Activated naive CD4-positive, alpha-beta T cell treated with anti-CD3 and anti-CD28 coated beads for 36 hours (primary cell): ENCODE measurements at regions of chr15 and their contacts with region 1.

Region 1: GRCh38 chr15:65869127-65869953 is at the start of gene RAB11A:
- DNase-seq: peak; percentile 95
- H3K4me3 Mint-ChIP-seq: peak within 1 kb of the TSS; percentile 99
- H3K27ac Mint-ChIP-seq: peak within 1 kb of the TSS; percentile 95
- H3K4me1 Mint-ChIP-seq: peaks cover 26% of the 10 kb centered on the region
- H3K27me3 Mint-ChIP-seq: peaks cover 4% of the 10 kb centered on the region
- total RNA-seq, gene RAB11A: 151 to 157 TPM

Region 2: GRCh38 chr15:65516997-65517865 is 352.1 kb before region 1 on chr15 and contains the start of gene DPP8:
- CTCF ChIA-PET with region 1: no interaction called
- intact Hi-C with region 1: loop called (anchors 1 kb)
- DNase-seq: peak; percentile 96
- H3K4me3 Mint-ChIP-seq: peak within 1 kb of the TSS; percentile 95
- H3K27ac Mint-ChIP-seq: peak within 1 kb of the TSS; percentile 88
- H3K4me1 Mint-ChIP-seq: peaks cover 35% of the 10 kb centered on the region
- H3K27me3 Mint-ChIP-seq: no peaks in the 10 kb centered on the region
- total RNA-seq, gene DPP8: 23.0 to 24.9 TPM

Region 3: GRCh38 chr15:65792130-65792987 is 77.0 kb before region 1 on chr15 and contains the start of gene DENND4A:
- CTCF ChIA-PET with region 1: no interaction called
- intact Hi-C with region 1: loop called (anchors 1 kb)
- DNase-seq: peak; percentile 99
- H3K4me3 Mint-ChIP-seq: peak within 1 kb of the TSS; percentile 88
- H3K27ac Mint-ChIP-seq: peak within 1 kb of the TSS; percentile 98
- H3K4me1 Mint-ChIP-seq: peaks cover 58% of the 10 kb centered on the region
- H3K27me3 Mint-ChIP-seq: no peaks in the 10 kb centered on the region
- total RNA-seq, gene DENND4A: 23.9 to 24.9 TPM

Region 4: DNA sequence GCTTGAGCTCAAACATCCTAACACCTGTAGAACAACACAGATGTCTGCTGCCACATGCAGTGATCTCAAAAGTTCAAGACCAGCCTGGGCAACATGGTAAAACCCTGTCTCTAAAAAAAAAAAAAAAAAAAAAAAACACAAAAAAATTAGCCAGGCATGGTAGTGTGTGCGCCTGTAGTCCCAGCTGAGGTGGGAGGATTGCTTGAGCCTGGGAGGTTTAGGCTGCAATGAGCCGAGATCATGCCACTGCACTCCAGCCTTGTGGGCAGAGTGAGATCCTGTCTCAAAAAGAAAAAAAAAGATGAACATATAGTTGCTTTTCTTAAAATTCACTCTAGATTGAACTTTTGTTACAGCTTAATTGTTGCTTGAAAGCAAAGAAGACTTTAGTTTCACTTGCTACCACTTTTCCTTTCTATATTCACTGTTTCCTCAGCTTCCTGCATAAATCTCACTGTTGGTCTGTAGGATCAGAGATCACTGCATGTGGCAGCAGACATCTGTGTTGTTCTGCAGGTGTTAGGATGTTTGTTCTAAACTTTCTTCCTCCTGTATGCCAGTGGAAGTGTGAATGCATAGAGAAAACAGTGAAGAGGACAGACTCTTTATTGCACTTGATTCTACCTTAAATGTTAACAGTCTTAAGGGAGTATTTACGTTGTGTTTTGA is 12.6 kb after region 1 on chr15:
- CTCF ChIA-PET with region 1: interaction called, 12 read pairs
- intact Hi-C with region 1: loop called (anchors 1 kb)
- DNase-seq: no peak
- H3K4me3 Mint-ChIP-seq: no peak overlapping the region
- H3K27ac Mint-ChIP-seq: peak overlapping the region; percentile 66
- H3K4me1 Mint-ChIP-seq: peaks cover 61% of the 10 kb centered on the region
- H3K27me3 Mint-ChIP-seq: no peaks in the 10 kb centered on the region

Region 5: DNA sequence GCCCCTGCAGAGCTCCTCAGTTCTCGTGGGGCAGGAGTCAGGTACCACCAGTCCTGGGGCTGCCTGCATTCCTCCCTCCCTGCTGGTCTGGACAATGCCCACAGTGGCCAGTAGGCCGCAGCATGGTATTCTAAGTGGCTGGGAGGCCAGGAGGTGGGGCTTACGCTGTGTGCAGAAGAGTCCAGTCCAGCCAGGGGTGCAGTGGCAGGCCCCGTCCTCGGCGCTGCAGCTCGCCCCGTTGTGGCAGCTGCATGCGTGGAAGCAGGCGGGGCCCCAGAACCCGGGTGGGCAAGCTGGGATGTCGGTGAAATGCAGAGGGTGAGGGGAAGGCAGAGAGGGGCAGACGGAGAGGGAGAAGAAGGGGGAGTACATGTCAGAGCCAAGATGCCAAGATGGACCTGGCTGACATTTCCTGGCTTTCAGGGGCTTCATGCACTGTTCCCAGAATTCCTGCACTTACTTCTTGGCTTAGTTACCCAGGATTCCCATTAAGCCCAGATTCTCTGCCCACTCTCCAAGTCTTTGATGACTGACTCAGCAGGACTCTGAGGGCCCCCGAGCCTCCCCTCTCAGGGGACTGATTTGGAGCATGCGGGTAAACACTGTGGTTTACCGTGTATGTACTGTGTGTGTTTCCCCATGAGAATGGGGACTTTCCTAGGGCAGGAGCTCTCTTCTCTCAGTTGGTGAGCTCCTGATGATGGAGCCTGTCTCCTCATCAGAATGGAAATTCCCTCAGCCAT is 47.5 kb after region 1 on chr15:
- CTCF ChIA-PET with region 1: interaction called, 5 read pairs
- intact Hi-C with region 1: loop called (anchors 2 kb)
- DNase-seq: peak; percentile 81
- H3K4me3 Mint-ChIP-seq: no peak overlapping the region
- H3K27ac Mint-ChIP-seq: peak overlapping the region; percentile 54
- H3K4me1 Mint-ChIP-seq: peaks cover 30% of the 10 kb centered on the region
- H3K27me3 Mint-ChIP-seq: no peaks in the 10 kb centered on the region

Region 6: GRCh38 chr15:67331676-67332075 is 1462.3 kb after region 1 on chr15:
- CTCF ChIA-PET with region 1: no interaction called
- intact Hi-C with region 1: no loop called
- DNase-seq: no peak
- H3K4me3 Mint-ChIP-seq: no peak overlapping the region
- H3K27ac Mint-ChIP-seq: no peak overlapping the region
- H3K4me1 Mint-ChIP-seq: no peaks in the 10 kb centered on the region
- H3K27me3 Mint-ChIP-seq: peaks cover 4% of the 10 kb centered on the region

Region 7: GRCh38 chr15:67479781-67480505 is 1610.6 kb after region 1 on chr15:
- CTCF ChIA-PET with region 1: no interaction called
- intact Hi-C with region 1: no loop called
- DNase-seq: no peak
- H3K4me3 Mint-ChIP-seq: no peak overlapping the region
- H3K27ac Mint-ChIP-seq: no peak overlapping the region
- H3K4me1 Mint-ChIP-seq: peaks cover 9% of the 10 kb centered on the region
- H3K27me3 Mint-ChIP-seq: no peaks in the 10 kb centered on the region